Activated CD4-positive, alpha-beta T cell treated with anti-CD3 and anti-CD28 coated beads, Interleukin-2, amount 10 ng/mL, durations not matched to agents 24 days and 14 days (primary cell): ENCODE measurements at regions of chr3 and their contacts with region 1.

Region 1: GRCh38 chr3:186570096-186570940 is at the start of gene DNAJB11:
- DNase-seq: peak; percentile 99
- H3K4me3 Mint-ChIP-seq: peak within 1 kb of the TSS; percentile 90
- H3K27ac Mint-ChIP-seq: peak within 1 kb of the TSS; percentile 99
- H3K4me1 Mint-ChIP-seq: peaks cover 47% of the 10 kb centered on the region
- H3K27me3 Mint-ChIP-seq: no peaks in the 10 kb centered on the region
- total RNA-seq, gene DNAJB11: 74.0 and 77.7 TPM in 2 replicates

Region 2: DNA sequence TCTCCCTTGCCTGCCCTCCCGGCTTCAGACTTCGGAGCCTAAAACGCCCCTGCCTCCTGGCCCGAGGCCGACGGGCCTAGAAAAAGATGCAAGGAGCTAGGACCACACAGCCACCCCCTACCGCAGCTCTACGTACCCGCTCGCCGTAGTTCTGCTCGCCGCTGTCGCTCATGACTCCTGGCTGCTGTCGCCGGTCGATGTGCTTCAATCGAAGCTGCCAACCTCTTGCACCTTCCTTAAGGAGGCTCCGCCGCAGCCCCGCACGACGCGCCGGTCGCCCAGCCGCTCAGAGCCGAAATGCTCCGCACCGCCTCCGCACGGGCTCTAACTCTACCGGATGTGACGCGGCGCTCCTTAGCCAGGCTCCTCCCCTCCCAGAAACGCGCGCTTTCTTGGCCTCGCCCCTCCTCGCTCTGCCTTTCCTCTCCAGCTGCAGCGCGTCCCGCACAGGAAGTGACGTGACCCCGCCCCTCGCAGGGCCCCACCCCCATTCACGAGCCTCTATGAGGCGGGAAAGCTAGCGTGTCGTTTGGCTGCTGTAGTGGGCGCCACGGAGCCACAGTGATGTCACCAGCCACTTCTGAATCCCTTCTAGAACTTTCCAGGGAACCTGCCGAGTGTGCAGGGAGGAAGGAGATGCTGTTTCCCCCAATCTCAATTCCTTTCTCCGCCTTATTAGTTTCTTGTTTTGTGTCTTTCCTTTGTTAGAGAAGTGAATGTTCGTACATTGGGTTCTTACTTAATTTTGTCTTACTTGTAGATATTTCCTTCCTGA is 632.4 kb before region 1 on chr3 and contains the start of gene TRA2B:
- intact Hi-C with region 1: loop called (anchors 1 kb)
- DNase-seq: peak; percentile 100
- H3K4me3 Mint-ChIP-seq: peak within 1 kb of the TSS; percentile 98
- H3K27ac Mint-ChIP-seq: peak within 1 kb of the TSS; percentile 100
- H3K4me1 Mint-ChIP-seq: peaks cover 33% of the 10 kb centered on the region
- H3K27me3 Mint-ChIP-seq: peaks cover 4% of the 10 kb centered on the region
- total RNA-seq, gene TRA2B: 311 and 314 TPM in 2 replicates

Region 3: DNA sequence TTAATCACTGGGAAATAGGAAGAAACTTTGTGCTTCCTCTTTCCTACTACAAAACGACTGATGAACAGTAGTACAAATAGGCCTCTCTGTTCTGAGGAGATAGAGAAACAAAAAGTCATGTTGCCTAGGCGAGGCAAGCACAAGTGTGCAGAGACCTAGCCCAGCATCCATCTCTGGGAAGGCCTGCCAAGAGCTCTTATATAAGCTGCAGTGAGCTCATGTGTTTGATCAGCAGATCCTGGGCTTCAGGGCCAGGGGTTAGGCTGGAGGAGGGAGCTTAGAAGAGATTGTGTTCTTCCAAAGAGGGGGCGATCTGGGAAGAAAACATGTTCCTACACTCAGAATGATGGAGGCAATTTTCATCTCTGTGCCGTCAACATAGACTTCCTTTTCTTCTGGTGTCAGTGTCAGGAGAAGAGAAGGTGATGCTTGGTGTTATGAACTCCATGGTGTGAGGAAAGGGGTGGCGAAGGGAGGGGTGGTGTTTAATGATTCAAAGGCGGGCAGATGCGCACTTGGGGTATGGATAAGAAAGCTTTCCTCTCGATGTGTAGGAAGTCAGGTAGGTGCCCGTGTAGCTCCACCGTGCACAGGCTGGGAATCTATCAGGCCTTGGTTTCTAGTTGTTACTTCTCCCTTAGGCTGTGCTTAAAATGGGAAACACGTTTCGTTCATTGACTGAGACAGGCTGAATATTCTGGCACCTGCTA is 431.9 kb before region 1 on chr3:
- intact Hi-C with region 1: no loop called
- DNase-seq: no peak
- H3K4me3 Mint-ChIP-seq: no peak overlapping the region
- H3K27ac Mint-ChIP-seq: no peak overlapping the region
- H3K4me1 Mint-ChIP-seq: peaks cover 2% of the 10 kb centered on the region
- H3K27me3 Mint-ChIP-seq: peaks cover 40% of the 10 kb centered on the region

Region 4: GRCh38 chr3:186617038-186617946 is 47.0 kb after region 1 on chr3:
- intact Hi-C with region 1: loop called (anchors 2 kb)
- DNase-seq: peak; percentile 94
- H3K4me3 Mint-ChIP-seq: peak overlapping the region; percentile 74
- H3K27ac Mint-ChIP-seq: peak overlapping the region; percentile 68
- H3K4me1 Mint-ChIP-seq: peaks cover 21% of the 10 kb centered on the region
- H3K27me3 Mint-ChIP-seq: peaks cover 30% of the 10 kb centered on the region

Region 5: GRCh38 chr3:186806089-186807055 is 236.1 kb after region 1 on chr3 and contains the start of gene RFC4:
- intact Hi-C with region 1: loop called (anchors 5 kb)
- DNase-seq: peak; percentile 96
- H3K4me3 Mint-ChIP-seq: peak within 1 kb of the TSS; percentile 93
- H3K27ac Mint-ChIP-seq: peak within 1 kb of the TSS; percentile 91
- H3K4me1 Mint-ChIP-seq: peaks cover 24% of the 10 kb centered on the region
- H3K27me3 Mint-ChIP-seq: no peaks in the 10 kb centered on the region
- total RNA-seq, gene RFC4: 116 and 119 TPM in 2 replicates

Region 6: GRCh38 chr3:186826976-186827731 is 256.8 kb after region 1 on chr3:
- intact Hi-C with region 1: loop called (anchors 5 kb)
- DNase-seq: peak; percentile 97
- H3K4me3 Mint-ChIP-seq: peak overlapping the region; percentile 98
- H3K27ac Mint-ChIP-seq: peak overlapping the region; percentile 90
- H3K4me1 Mint-ChIP-seq: peaks cover 22% of the 10 kb centered on the region
- H3K27me3 Mint-ChIP-seq: peaks cover 44% of the 10 kb centered on the region

Region 7: DNA sequence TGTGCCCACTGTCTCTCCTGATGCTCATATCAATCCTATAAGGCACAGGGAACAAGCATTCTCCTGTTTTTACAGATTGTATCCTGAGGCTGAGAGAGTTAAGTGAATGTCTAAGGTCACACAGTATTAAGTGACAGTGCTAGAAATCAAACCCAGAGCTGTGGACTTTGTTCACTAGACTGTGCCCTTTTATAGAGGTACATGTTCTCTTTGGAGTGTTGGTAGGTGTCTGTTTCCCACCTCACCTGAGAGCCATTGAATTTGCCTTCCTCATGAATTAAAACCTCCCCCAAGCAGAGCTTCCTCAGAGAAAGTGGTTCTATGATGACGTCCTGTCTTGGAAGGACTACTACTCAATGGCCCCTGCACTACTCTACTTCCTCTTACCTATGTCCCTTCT is 284.6 kb after region 1 on chr3:
- intact Hi-C with region 1: no loop called
- DNase-seq: peak; percentile 34
- H3K4me3 Mint-ChIP-seq: no peak overlapping the region
- H3K27ac Mint-ChIP-seq: no peak overlapping the region
- H3K4me1 Mint-ChIP-seq: peaks cover 12% of the 10 kb centered on the region
- H3K27me3 Mint-ChIP-seq: no peaks in the 10 kb centered on the region